Activated CD4-positive, alpha-beta T cell treated with anti-CD3 and anti-CD28 coated beads for 36 hours (primary cell): ENCODE measurements at regions of chr13 and their contacts with region 1.

Region 1: DNA sequence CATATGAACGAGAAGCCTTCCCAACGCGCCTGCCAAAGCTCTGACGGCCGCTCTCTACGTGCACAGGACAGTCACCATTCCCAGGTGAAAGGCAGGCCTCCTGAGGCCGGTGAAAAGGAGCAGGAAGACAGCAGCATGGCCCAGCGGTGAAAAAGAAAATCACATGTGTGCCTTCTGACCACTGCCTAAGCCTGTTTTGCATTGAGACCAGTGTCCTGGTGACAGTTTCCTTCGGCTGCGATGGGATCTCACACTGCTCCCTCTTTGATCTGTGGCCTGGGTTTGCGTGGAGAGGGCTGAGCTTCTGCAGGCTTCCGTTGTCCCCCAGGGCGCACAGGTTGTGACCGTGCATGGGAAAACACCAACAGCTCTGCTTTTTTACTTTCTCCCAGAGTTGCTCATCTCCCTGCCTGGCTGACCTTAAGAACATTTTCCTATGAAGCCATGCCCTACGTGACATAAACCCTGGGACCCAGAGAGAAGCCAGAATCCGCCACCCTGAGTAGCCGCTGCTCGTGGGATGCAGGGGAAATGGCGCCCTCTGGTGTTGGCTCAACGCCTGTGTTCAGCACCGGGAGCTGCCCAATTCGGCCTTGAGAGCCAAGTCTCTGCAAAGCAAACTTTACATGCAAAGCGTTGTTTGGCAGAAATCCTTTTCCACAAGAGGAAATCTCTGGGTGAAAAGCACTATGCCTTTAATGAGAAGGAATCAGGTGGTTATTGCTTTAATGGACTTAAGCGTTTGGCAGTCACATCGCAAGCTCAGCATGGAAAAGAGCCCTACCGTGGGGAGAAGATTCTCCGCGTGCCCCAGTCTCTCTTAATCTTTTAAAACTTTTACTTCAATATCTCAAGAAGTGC is 112.2 kb upstream of the GPR12 start:
- DNase-seq: peak; percentile 82
- ATAC-seq: no peak
- H3K4me3 Mint-ChIP-seq: no peak overlapping the region
- H3K27ac Mint-ChIP-seq: no peak overlapping the region
- H3K4me1 Mint-ChIP-seq: peaks cover 2% of the 10 kb centered on the region
- H3K27me3 Mint-ChIP-seq: peaks cover 9% of the 10 kb centered on the region

Region 2: GRCh38 chr13:26887594-26887993 is 14.8 kb after region 1 on chr13:
- CTCF ChIA-PET with region 1: interaction called, 13 read pairs
- POLR2A ChIA-PET with region 1: no interaction called
- intact Hi-C with region 1: no loop called
- DNase-seq: no peak
- ATAC-seq: no peak
- H3K4me3 Mint-ChIP-seq: no peak overlapping the region
- H3K27ac Mint-ChIP-seq: no peak overlapping the region
- H3K4me1 Mint-ChIP-seq: no peaks in the 10 kb centered on the region
- H3K27me3 Mint-ChIP-seq: peaks cover 19% of the 10 kb centered on the region